Gastrocnemius medialis (tissue), 4 donors: ENCODE measurements at regions of chr12 and their contacts with region 1.

Region 1: GRCh38 chr12:50174971-50175715 is 8.0 kb upstream of the CERS5 start:
- DNase-seq: no peak
- ATAC-seq: no peak
- H3K4me3 ChIP-seq: no peak overlapping the region
- H3K27ac ChIP-seq: no peak overlapping the region
- H3K4me1 ChIP-seq: no peaks in the 10 kb centered on the region
- H3K27me3 ChIP-seq: no peaks in the 10 kb centered on the region
- CTCF ChIP-seq: peak; percentile 70 to 83 (median 72)
- POLR2A ChIP-seq: no peak

Region 2: DNA sequence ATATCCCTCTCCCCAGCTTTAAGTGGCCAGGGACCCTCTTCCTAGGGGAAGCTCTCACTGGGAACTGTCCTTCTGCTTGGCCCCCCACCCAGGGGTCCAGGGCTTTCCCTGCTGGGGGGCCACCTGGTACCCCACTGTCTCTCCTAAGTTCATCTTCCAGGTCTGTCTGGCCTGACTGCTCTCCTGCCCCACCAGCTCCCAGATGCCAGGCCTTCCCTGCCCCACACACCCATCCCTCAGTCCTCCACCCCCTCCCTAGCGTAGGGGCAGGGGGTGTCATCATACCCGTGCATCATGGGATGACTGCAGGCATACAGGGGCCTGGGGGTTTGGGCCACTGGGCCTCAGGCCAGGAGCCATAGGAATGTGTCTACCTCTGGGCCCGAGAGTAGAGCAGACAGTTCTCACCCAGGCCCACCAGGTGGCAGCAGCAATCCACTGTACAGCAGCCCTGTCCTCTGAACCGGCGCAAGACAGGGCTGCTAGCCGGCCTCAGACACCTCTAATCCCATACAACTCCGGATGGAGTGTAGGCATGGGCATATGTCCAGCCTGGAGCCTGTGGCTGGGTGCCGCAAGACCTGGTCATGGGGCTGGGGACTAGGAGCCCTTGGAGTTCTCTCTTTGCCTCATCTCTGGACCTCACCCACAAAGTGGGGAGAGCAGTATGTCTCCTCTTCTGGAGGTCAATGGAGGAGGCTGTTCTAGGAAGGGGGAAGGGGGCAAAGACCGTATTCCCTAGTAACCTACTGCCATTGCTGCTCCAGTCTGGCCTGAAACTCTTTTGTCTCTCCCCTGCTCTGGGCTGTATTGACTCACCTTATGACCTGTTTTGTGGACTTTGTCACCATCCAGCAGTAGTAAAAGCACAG is 100.0 kb before region 1 on chr12:
- in situ Hi-C with region 1: loop called in 3 of 4 experiments (anchors 5 to 10 kb)
- intact Hi-C with region 1: loop called (anchors 1 kb)
- DNase-seq: peak; percentile 62 to 77
- ATAC-seq: peak; percentile 88 to 89
- H3K4me3 ChIP-seq: no peak overlapping the region
- H3K27ac ChIP-seq: no peak overlapping the region
- H3K4me1 ChIP-seq: peaks cover 0 to 3% of the 10 kb centered on the region in 2 donors
- H3K27me3 ChIP-seq: no peaks in the 10 kb centered on the region
- CTCF ChIP-seq: peak; percentile 94 to 97 (median 95)
- POLR2A ChIP-seq: no peak

Region 3: GRCh38 chr12:50090391-50090790 is 84.8 kb before region 1 on chr12:
- in situ Hi-C with region 1: loop called in 1 of 4 experiments (anchors 5 kb)
- intact Hi-C with region 1: no loop called
- DNase-seq: no peak
- ATAC-seq: no peak
- H3K4me3 ChIP-seq: no peak overlapping the region
- H3K27ac ChIP-seq: peak overlapping the region; percentile 44 to 72 (median 65)
- H3K4me1 ChIP-seq: peaks cover 9 to 14% of the 10 kb centered on the region in 2 donors
- H3K27me3 ChIP-seq: no peaks in the 10 kb centered on the region
- CTCF ChIP-seq: no peak
- POLR2A ChIP-seq: no peak

Region 4: DNA sequence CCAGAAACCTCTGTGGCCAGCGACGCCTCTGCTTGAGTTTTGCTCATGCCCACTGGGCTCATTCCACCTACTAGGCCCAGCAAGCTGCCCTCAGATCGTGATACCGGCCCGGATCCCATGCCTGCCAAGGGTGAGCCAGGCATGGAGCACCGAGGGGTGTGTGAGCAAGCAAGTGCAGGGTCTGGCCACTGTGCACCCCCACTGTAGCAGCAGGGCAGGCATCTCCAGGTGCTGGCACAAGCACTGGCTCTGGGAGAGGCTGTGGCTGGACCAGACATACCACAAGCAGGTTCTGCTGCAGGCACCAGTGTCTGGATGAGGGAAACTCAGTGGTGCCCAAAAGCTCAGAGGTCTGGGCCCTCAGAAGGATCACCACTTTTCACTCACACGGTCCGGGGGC is 200.7 kb after region 1 on chr12:
- in situ Hi-C with region 1: no loop called
- intact Hi-C with region 1: no loop called
- DNase-seq: no peak
- ATAC-seq: no peak
- H3K4me3 ChIP-seq: no peak overlapping the region
- H3K27ac ChIP-seq: no peak overlapping the region
- H3K4me1 ChIP-seq: no peaks in the 10 kb centered on the region
- H3K27me3 ChIP-seq: no peaks in the 10 kb centered on the region
- CTCF ChIP-seq: no peak
- POLR2A ChIP-seq: no peak